Activated T-helper 2 cell treated with anti-CD3 and anti-CD28 coated beads, Interferon-gamma antibody, Interleukin-2, Interleukin-4, amounts not matched to agents 10 μg/mL and 5 μg/mL and 100 μg/mL, durations not matched to agents 14 hours and 24 hours and 36 hours (primary cell): ENCODE measurements at regions of chr10 and their contacts with region 1.

Region 1: GRCh38 chr10:3757638-3758490 is 27.1 kb downstream of the KLF6 start:
- DNase-seq: peak; percentile 56
- H3K4me3 Mint-ChIP-seq: peak overlapping the region; percentile 55
- H3K27ac Mint-ChIP-seq: peak overlapping the region; percentile 97
- H3K4me1 Mint-ChIP-seq: peaks cover 70% of the 10 kb centered on the region
- H3K27me3 Mint-ChIP-seq: no peaks in the 10 kb centered on the region

Region 2: GRCh38 chr10:3197348-3198003 is 560.4 kb before region 1 on chr10:
- intact Hi-C with region 1: loop called (anchors 5 kb)
- DNase-seq: peak; percentile 77
- H3K4me3 Mint-ChIP-seq: peak overlapping the region; percentile 49
- H3K27ac Mint-ChIP-seq: peak overlapping the region; percentile 56
- H3K4me1 Mint-ChIP-seq: peaks cover 18% of the 10 kb centered on the region
- H3K27me3 Mint-ChIP-seq: peaks cover 85% of the 10 kb centered on the region

Region 3: GRCh38 chr10:3424110-3424851 is 333.6 kb before region 1 on chr10:
- intact Hi-C with region 1: no loop called
- DNase-seq: no peak
- H3K4me3 Mint-ChIP-seq: no peak overlapping the region
- H3K27ac Mint-ChIP-seq: no peak overlapping the region
- H3K4me1 Mint-ChIP-seq: peaks cover 33% of the 10 kb centered on the region
- H3K27me3 Mint-ChIP-seq: peaks cover 16% of the 10 kb centered on the region

Region 4: DNA sequence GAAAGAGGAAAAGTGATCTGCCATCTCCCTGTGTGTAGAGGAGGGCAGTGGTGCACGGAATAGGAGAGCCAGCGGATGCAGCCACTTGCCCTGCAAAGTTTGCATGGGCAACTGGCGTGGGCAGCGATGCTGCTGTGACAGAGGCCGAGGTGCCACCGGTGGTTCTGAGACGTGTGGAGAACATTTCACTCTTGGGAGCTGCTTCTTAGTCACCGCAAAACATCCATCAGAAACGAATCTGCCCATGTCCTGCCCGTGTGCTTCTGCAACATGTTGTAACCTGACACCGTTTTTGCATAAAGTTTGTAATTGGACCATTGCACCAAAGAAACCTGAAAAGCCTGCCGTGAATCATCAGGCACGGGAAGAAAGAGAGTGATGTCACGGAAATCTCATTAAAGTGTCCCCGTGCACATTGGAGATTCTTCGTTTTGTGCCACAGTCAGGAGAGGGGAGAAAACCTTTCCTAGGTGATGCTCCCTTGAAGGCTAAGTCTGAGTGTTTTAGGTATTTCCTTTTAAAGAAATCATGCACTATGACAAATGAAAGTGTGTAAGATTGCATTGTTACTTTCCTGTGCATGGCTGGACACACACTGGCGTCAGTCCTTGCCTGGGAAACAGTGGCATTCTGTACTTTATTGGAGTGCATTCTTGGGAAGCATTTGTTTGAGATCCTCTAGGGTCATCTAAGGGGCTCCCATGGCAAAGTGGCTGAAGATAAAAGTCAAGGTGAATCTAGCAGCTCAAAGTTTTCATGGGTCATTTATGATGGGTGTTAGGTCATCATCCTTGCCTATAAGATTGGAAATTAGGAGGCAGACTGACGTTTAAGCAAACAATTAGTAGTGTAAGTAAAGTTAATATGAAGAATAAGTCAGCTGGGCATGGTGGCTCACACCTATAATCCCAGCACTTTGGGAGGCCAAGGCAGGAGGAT is 275.4 kb before region 1 on chr10:
- intact Hi-C with region 1: loop called (anchors 5 kb)
- DNase-seq: no peak
- H3K4me3 Mint-ChIP-seq: no peak overlapping the region
- H3K27ac Mint-ChIP-seq: no peak overlapping the region
- H3K4me1 Mint-ChIP-seq: peaks cover 61% of the 10 kb centered on the region
- H3K27me3 Mint-ChIP-seq: no peaks in the 10 kb centered on the region

Region 5: GRCh38 chr10:3668276-3668965 is 89.4 kb before region 1 on chr10:
- intact Hi-C with region 1: loop called (anchors 5 kb)
- DNase-seq: peak; percentile 34
- H3K4me3 Mint-ChIP-seq: peak overlapping the region; percentile 58
- H3K27ac Mint-ChIP-seq: peak overlapping the region; percentile 60
- H3K4me1 Mint-ChIP-seq: peaks cover 30% of the 10 kb centered on the region
- H3K27me3 Mint-ChIP-seq: peaks cover 16% of the 10 kb centered on the region

Region 6: DNA sequence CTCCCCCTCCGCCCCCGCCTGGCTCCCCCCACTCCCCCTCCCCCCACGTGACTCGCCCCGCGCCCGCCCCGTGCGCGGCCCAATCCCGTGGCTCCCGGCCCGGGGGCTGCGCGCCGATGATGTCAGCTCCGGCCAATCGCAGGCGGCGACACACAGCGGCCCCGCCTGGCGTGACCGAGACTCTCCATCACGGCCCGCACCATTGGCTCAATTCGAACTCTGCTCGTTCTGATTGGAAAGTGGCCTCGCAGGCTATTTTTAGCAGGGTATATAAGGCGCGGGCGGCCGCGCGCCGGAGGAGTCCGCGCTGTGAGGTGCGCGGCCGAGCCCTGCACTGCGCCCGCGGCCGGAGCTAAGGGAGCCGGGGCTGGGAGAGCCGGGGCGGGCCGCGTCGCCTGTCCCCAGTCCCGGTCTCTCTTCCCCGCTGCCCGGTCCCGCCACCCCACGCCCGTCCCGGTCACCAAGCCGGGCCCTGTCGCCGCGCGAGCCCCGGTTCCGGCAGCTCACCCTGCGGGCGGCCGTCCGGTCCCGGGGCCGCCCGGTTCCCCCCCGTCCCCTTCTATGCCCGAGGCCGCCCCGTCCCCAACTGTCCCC is 27.5 kb after region 1 on chr10:
- intact Hi-C with region 1: loop called (anchors 2 kb)
- DNase-seq: peak; percentile 99
- H3K4me3 Mint-ChIP-seq: peak overlapping the region; percentile 83
- H3K27ac Mint-ChIP-seq: peak overlapping the region; percentile 96
- H3K4me1 Mint-ChIP-seq: peaks cover 32% of the 10 kb centered on the region
- H3K27me3 Mint-ChIP-seq: no peaks in the 10 kb centered on the region

Region 7: DNA sequence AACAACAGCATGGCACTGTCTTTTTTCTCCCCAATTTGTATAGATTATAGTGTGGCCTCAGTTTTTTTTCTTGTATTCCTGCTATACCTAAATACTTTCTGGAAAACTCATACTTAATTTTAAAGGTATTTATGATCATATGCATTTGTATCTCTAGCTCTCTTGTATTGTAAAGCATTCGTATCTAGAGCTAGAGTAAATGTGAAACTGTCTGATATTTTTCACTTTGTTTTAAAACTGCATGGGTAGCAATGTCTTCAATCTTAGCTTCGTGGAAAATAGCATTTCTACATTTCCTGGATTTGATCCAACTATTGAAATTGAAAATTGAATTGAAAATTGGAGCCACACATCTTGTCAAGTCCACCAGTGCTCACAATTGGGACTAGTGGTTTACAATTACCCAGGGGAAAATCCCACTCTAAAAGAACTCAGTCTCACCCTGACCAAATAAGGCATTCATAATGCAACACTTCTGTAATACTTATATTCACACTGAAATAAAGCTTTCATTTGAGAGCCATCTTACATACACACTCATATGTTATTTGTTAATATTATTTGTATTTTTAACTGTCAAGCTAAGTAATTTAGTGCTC is 78.5 kb after region 1 on chr10:
- intact Hi-C with region 1: no loop called
- DNase-seq: no peak
- H3K4me3 Mint-ChIP-seq: peak overlapping the region; percentile 28
- H3K27ac Mint-ChIP-seq: peak overlapping the region; percentile 84
- H3K4me1 Mint-ChIP-seq: peaks cover 56% of the 10 kb centered on the region
- H3K27me3 Mint-ChIP-seq: no peaks in the 10 kb centered on the region

Region 8: GRCh38 chr10:3852147-3852904 is 94.5 kb after region 1 on chr10:
- intact Hi-C with region 1: loop called (anchors 5 kb)
- DNase-seq: peak; percentile 59
- H3K4me3 Mint-ChIP-seq: peak overlapping the region; percentile 9
- H3K27ac Mint-ChIP-seq: peak overlapping the region; percentile 79
- H3K4me1 Mint-ChIP-seq: peaks cover 42% of the 10 kb centered on the region
- H3K27me3 Mint-ChIP-seq: no peaks in the 10 kb centered on the region